RWPE1 (cell line): ENCODE measurements at regions of chr1 and their contacts with region 1.

Region 1: GRCh38 chr1:68273530-68273929 is 41.2 kb upstream of the WLS start:
- DNase-seq: no peak
- H3K27ac ChIP-seq: no peak overlapping the region
- CTCF ChIP-seq: no peak

Region 2: DNA sequence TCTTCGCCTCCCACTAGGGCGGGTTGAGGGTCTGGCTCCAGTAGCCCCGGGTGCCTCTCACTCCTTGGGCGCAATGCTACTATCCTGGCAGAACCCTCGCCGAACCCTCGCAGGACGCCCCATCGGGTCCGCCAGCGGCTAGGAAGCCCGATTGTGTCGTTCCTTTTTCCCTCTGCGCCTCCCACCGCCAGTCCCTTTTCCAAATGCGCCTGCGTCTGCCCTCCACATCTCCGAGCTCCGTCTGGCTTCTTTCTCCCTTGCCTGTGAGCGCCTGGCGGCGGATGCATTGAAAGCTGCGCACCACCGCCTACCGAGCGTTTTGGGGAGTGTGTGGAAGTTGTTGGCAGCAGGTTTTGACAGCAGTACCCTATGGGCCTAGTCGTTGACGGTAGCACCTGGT is 222.1 kb before region 1 on chr1:
- CTCF ChIA-PET with region 1: interaction called, 10 read pairs
- POLR2A ChIA-PET with region 1: no interaction called
- DNase-seq: peak; percentile 10
- H3K27ac ChIP-seq: no peak overlapping the region
- CTCF ChIP-seq: no peak

Region 3: GRCh38 chr1:68255301-68255700 is 18.2 kb before region 1 on chr1:
- CTCF ChIA-PET with region 1: no interaction called
- POLR2A ChIA-PET with region 1: no interaction called
- DNase-seq: no peak
- H3K27ac ChIP-seq: no peak overlapping the region
- CTCF ChIP-seq: no peak